CD8-positive, alpha-beta T cell (primary cell): ENCODE measurements at regions of chr22 and their contacts with region 1.

Region 1: GRCh38 chr22:37623075-37624016 is 14.7 kb downstream of the GGA1 start:
- DNase-seq: peak; percentile 64 to 87 (median 79)
- ATAC-seq: peak; percentile 86
- H3K4me3 ChIP-seq: peak overlapping the region in 1 of 2 experiments; percentile 25
- H3K4me3 Mint-ChIP-seq: peak overlapping the region; percentile 68
- H3K27ac ChIP-seq: peak overlapping the region; percentile 29 to 58
- H3K27ac Mint-ChIP-seq: peak overlapping the region; percentile 95
- H3K4me1 ChIP-seq: peaks cover 53% of the 10 kb centered on the region
- H3K4me1 Mint-ChIP-seq: peaks cover 50% of the 10 kb centered on the region
- H3K27me3 ChIP-seq: no peaks in the 10 kb centered on the region
- H3K27me3 Mint-ChIP-seq: no peaks in the 10 kb centered on the region
- CTCF ChIP-seq: peak; percentile 86

Region 2: DNA sequence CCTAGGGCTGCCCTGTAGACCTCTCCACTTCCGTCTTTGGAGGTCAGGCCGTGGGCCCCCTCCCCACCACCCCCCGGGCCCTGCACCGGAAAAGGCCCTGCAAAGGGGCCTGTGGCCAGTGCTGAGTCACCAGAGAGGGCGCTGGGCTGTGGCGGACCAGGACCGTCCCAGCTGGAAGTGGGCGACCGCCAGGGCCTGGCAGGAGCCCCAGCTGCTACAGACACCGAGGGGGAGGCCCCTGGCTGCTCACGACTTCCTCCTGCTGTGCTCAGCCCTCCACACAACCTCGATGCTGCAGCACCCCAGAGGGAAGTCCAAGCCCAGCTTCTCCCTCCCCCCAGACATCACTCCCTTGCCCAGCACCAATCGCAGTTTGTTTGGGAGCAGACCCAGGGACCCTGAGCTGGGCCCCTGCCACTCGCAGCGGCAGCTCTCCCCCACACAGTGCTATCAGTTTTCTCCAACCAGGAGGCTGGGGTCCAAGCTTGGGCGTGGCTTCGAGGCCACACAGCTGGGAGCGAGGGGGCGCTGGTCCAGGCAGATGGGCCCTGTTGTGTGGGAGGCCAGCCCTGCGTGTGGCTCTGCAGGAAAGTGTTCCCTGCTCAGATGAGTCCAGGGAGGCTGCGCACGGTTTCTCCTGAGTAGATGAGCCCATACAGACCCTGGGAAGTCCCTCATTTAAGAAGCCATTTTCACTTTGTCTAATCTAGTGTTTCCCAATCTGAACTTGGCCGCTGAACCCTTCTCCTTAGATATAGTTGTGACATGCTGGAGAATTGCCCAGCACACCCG is 10.5 kb after region 1 on chr22:
- CTCF ChIA-PET with region 1: interaction called, 2,176 read pairs
- POLR2A ChIA-PET with region 1: interaction called, 123 read pairs
- intact Hi-C with region 1: loop called in 1 of 2 experiments (anchors 1 kb)
- DNase-seq: peak in 8 of 9 experiments; percentile 42 to 84 (median 64)
- ATAC-seq: peak; percentile 62
- H3K4me3 ChIP-seq: peak overlapping the region; percentile 34 to 40
- H3K4me3 Mint-ChIP-seq: peak overlapping the region; percentile 74
- H3K27ac ChIP-seq: peak overlapping the region; percentile 39 to 79
- H3K27ac Mint-ChIP-seq: peak overlapping the region; percentile 92
- H3K4me1 ChIP-seq: peaks cover 89% of the 10 kb centered on the region
- H3K4me1 Mint-ChIP-seq: peaks cover 78% of the 10 kb centered on the region
- H3K27me3 ChIP-seq: no peaks in the 10 kb centered on the region
- H3K27me3 Mint-ChIP-seq: no peaks in the 10 kb centered on the region
- CTCF ChIP-seq: no peak

Region 3: DNA sequence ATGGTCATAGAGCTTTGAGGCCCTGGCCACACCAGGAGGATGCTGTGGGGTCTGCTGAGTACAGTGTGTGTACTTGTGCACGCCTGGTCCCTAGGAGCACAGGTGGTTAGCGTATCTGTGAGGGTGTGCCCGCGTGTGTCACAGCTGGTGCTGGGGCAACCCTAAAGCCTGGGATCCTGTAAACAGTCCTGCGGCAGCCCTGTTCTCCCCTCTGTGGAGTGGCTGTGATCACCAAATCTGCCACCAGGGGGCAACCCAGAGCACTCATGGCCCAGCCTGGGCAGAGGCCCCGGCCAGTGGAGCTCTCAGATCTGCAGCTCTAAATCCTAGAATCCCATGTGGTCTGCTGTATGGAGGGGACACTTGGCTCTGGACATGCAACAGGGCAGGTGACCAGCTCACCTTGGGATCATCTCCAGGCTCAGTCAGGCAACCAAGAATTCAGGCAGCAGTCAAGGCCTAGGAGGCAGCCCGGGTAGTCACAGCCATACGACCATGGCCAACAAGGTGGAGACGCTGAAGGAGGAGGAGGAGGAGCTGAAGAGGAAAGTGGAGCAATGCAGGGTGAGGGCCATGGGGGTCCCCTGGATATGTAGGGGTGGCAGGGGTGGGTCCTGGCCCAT is 20.0 kb after region 1 on chr22:
- CTCF ChIA-PET with region 1: interaction called, 2,176 read pairs
- POLR2A ChIA-PET with region 1: interaction called, 123 read pairs
- intact Hi-C with region 1: loop called (anchors 1 kb)
- DNase-seq: peak; percentile 78 to 93 (median 85)
- ATAC-seq: peak; percentile 62
- H3K4me3 ChIP-seq: no peak overlapping the region
- H3K4me3 Mint-ChIP-seq: peak overlapping the region; percentile 65
- H3K27ac ChIP-seq: peak overlapping the region; percentile 15 to 43
- H3K27ac Mint-ChIP-seq: peak overlapping the region; percentile 69
- H3K4me1 ChIP-seq: peaks cover 39% of the 10 kb centered on the region
- H3K4me1 Mint-ChIP-seq: peaks cover 42% of the 10 kb centered on the region
- H3K27me3 ChIP-seq: no peaks in the 10 kb centered on the region
- H3K27me3 Mint-ChIP-seq: no peaks in the 10 kb centered on the region
- CTCF ChIP-seq: peak; percentile 85

Region 4: GRCh38 chr22:37676736-37677492 is 53.6 kb after region 1 on chr22:
- CTCF ChIA-PET with region 1: interaction called, 2,176 read pairs
- POLR2A ChIA-PET with region 1: interaction called, 11 read pairs
- intact Hi-C with region 1: loop called (anchors 1 kb)
- DNase-seq: peak; percentile 85 to 96 (median 94)
- ATAC-seq: peak; percentile 89
- H3K4me3 ChIP-seq: peak overlapping the region; percentile 73 to 93
- H3K4me3 Mint-ChIP-seq: peak overlapping the region; percentile 95
- H3K27ac ChIP-seq: peak overlapping the region; percentile 91 to 95
- H3K27ac Mint-ChIP-seq: peak overlapping the region; percentile 100
- H3K4me1 ChIP-seq: peaks cover 50% of the 10 kb centered on the region
- H3K4me1 Mint-ChIP-seq: peaks cover 55% of the 10 kb centered on the region
- H3K27me3 ChIP-seq: no peaks in the 10 kb centered on the region
- H3K27me3 Mint-ChIP-seq: no peaks in the 10 kb centered on the region
- CTCF ChIP-seq: no peak

Region 5: GRCh38 chr22:37920126-37920525 is 296.8 kb after region 1 on chr22:
- CTCF ChIA-PET with region 1: no interaction called
- POLR2A ChIA-PET with region 1: no interaction called
- intact Hi-C with region 1: no loop called
- DNase-seq: no peak
- ATAC-seq: no peak
- H3K4me3 ChIP-seq: no peak overlapping the region
- H3K4me3 Mint-ChIP-seq: no peak overlapping the region
- H3K27ac ChIP-seq: no peak overlapping the region
- H3K27ac Mint-ChIP-seq: peak overlapping the region; percentile 35
- H3K4me1 ChIP-seq: no peaks in the 10 kb centered on the region
- H3K4me1 Mint-ChIP-seq: peaks cover 2% of the 10 kb centered on the region
- H3K27me3 ChIP-seq: no peaks in the 10 kb centered on the region
- H3K27me3 Mint-ChIP-seq: no peaks in the 10 kb centered on the region
- CTCF ChIP-seq: no peak